ENCODE measurements at regions of chr11 and their contacts with region 1.

Region 1: GRCh38 chr11:125091247-125091876 is 20.1 kb downstream of the TMEM218 start:
- DNase-seq: peak in 1 of 2 experiments; percentile 41
- H3K4me3 ChIP-seq: no peak overlapping the region
- H3K27ac ChIP-seq: no peak overlapping the region
- H3K4me1 ChIP-seq: peaks cover 2 to 12% (median 6%) of the 10 kb centered on the region in 4 experiments; a peak in 6 of 7 replicates
- H3K27me3 ChIP-seq: no peaks in the 10 kb centered on the region
- CTCF ChIP-seq: peak; percentile 38 to 94 (median 74)
- EP300 ChIP-seq: no peak
- POLR2A ChIP-seq: no peak
- RAD21 ChIP-seq: peak; percentile 100

Region 2: DNA sequence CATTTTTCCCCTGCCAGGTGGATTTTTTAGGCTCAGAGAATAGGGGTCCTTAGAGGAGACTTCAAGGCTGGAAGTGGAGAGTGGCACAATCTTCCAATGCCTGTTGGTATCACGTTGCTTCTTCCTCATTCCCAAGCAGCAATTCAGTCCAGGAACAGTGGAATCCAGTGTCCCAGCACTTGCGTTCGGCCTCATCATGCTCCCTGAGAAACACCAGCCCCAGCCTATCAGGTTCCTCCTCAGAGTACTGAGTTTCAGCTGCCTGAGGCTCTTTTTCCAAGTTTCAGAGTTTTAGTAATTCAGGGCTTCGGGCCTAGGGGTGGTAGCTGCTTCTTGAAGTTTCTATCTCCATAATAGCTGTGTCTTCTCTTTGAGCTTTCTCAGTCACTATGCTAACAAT is 383.5 kb before region 1 on chr11:
- CTCF ChIA-PET with region 1: no interaction called
- POLR2A ChIA-PET with region 1: no interaction called
- DNase-seq: no peak
- H3K4me3 ChIP-seq: no peak overlapping the region
- H3K27ac ChIP-seq: no peak overlapping the region
- H3K4me1 ChIP-seq: no peaks in the 10 kb centered on the region
- H3K27me3 ChIP-seq: no peaks in the 10 kb centered on the region
- CTCF ChIP-seq: no peak
- EP300 ChIP-seq: no peak
- POLR2A ChIP-seq: no peak
- RAD21 ChIP-seq: no peak

Region 3: GRCh38 chr11:125062931-125063428 is 28.4 kb before region 1 on chr11 and contains the start of gene SLC37A2:
- CTCF ChIA-PET with region 1: interaction called, 217 read pairs
- POLR2A ChIA-PET with region 1: no interaction called
- DNase-seq: no peak
- H3K4me3 ChIP-seq: peak within 1 kb of the TSS; percentile 60 to 78 (median 75)
- H3K27ac ChIP-seq: no peak within 1 kb of the TSS
- H3K4me1 ChIP-seq: peaks cover 0 to 2% (median 0%) of the 10 kb centered on the region in 4 experiments; a peak in 2 of 7 replicates
- H3K27me3 ChIP-seq: peaks cover 1 to 29% (median 24%) of the 10 kb centered on the region in 4 experiments
- CTCF ChIP-seq: peak in 2 of 3 experiments; percentile 19 to 22; a peak in 2 of 4 replicates
- EP300 ChIP-seq: no peak
- POLR2A ChIP-seq: no peak
- RAD21 ChIP-seq: peak; percentile 26 to 36; a peak in 3 of 4 replicates
- total RNA-seq, gene SLC37A2: 1.1 and 1.3 TPM in 2 replicates

Region 4: GRCh38 chr11:125111343-125112207 is 20.2 kb after region 1 on chr11 and contains the start of gene TMEM218:
- CTCF ChIA-PET with region 1: interaction called, 247 read pairs
- POLR2A ChIA-PET with region 1: no interaction called
- DNase-seq: peak; percentile 92 to 99
- H3K4me3 ChIP-seq: peak within 1 kb of the TSS; percentile 59 to 80 (median 76)
- H3K27ac ChIP-seq: peak within 1 kb of the TSS; percentile 63
- H3K4me1 ChIP-seq: peaks cover 2 to 6% (median 3%) of the 10 kb centered on the region in 4 experiments; a peak in 3 of 7 replicates
- H3K27me3 ChIP-seq: no peaks in the 10 kb centered on the region
- CTCF ChIP-seq: no peak
- EP300 ChIP-seq: no peak
- POLR2A ChIP-seq: no peak
- RAD21 ChIP-seq: no peak
- total RNA-seq, gene TMEM218: 17.0 and 17.3 TPM in 2 replicates

Region 5: DNA sequence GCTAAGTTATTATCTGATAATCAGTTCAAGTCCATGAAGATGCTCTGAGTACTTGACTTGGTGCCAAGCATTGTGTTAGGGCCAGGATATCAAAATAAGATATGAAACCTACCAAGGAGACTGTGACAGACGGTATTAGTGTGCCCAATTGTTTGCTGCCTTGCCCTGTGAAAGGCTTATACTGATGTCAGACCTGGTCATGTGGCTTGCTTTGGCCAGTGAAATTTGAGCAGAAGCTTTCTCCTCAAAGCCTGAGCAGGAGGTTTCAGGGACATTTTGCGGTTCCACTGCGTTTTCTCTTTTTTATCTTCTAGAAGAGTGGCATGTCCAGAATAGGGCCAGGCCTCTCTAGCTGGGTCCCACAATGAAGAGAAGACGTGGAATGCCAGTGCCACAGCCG is 57.4 kb after region 1 on chr11:
- CTCF ChIA-PET with region 1: interaction called, 148 read pairs
- POLR2A ChIA-PET with region 1: no interaction called
- DNase-seq: no peak
- H3K4me3 ChIP-seq: no peak overlapping the region
- H3K27ac ChIP-seq: no peak overlapping the region
- H3K4me1 ChIP-seq: peaks cover 0 to 10% (median 8%) of the 10 kb centered on the region in 4 experiments; a peak in 4 of 7 replicates
- H3K27me3 ChIP-seq: peaks cover 0 to 8% (median 5%) of the 10 kb centered on the region in 4 experiments; a peak in 6 of 7 replicates
- CTCF ChIP-seq: no peak
- EP300 ChIP-seq: no peak
- POLR2A ChIP-seq: no peak
- RAD21 ChIP-seq: no peak

Region 6: GRCh38 chr11:125224391-125225010 is 133.1 kb after region 1 on chr11:
- CTCF ChIA-PET with region 1: interaction called, 11 read pairs
- POLR2A ChIA-PET with region 1: no interaction called
- DNase-seq: no peak
- H3K4me3 ChIP-seq: no peak overlapping the region
- H3K27ac ChIP-seq: peak overlapping the region; percentile 17; the same call in 1 of the 2 replicates
- H3K4me1 ChIP-seq: peaks cover 7 to 26% (median 18%) of the 10 kb centered on the region in 4 experiments
- H3K27me3 ChIP-seq: no peaks in the 10 kb centered on the region; a peak in 1 of 7 replicates
- CTCF ChIP-seq: peak; percentile 27 to 40 (median 34); a peak in 3 of 4 replicates
- EP300 ChIP-seq: no peak
- POLR2A ChIP-seq: no peak
- RAD21 ChIP-seq: peak; percentile 40 to 48

Region 7: GRCh38 chr11:125410091-125410490 is 318.7 kb after region 1 on chr11:
- CTCF ChIA-PET with region 1: interaction called, 71 read pairs
- POLR2A ChIA-PET with region 1: no interaction called
- DNase-seq: peak in 1 of 2 experiments; percentile 60
- H3K4me3 ChIP-seq: no peak overlapping the region
- H3K27ac ChIP-seq: no peak overlapping the region
- H3K4me1 ChIP-seq: peaks cover 0 to 8% (median 4%) of the 10 kb centered on the region in 4 experiments; a peak in 3 of 7 replicates
- H3K27me3 ChIP-seq: 0 out of 7 replicates have a peak, but pooled peaks cover 0 to 4% (median under 1%) of the 10 kb centered on the region in 4 experiments
- CTCF ChIP-seq: no peak
- EP300 ChIP-seq: no peak
- POLR2A ChIP-seq: no peak
- RAD21 ChIP-seq: no peak